Head of caudate nucleus (tissue), 42 donors: ENCODE measurements at regions of chr13 and their contacts with region 1.

Region 1: DNA sequence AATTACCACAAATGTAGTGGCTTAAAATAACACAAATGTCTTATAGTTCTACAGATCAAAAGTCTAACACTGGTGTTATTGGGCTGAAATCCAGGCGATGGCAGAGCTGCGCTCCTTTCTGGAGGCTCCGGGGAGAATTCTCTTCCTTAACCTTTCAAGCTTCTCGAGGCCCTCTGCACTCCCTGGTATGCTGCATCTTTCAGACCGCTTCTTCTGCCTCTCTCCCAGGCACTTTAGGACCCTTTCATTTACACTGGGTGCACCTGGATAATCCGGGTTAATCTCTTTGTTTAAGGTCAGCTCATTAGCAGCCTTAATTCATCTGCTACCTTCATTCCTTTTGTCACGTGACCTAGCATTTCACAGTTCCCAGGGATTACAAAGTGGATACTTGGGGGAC is 211.3 kb upstream of the RFC3 start:
- DNase-seq: peak in 41 of 42 donors; percentile 8 to 84 (median 55)

Region 2: DNA sequence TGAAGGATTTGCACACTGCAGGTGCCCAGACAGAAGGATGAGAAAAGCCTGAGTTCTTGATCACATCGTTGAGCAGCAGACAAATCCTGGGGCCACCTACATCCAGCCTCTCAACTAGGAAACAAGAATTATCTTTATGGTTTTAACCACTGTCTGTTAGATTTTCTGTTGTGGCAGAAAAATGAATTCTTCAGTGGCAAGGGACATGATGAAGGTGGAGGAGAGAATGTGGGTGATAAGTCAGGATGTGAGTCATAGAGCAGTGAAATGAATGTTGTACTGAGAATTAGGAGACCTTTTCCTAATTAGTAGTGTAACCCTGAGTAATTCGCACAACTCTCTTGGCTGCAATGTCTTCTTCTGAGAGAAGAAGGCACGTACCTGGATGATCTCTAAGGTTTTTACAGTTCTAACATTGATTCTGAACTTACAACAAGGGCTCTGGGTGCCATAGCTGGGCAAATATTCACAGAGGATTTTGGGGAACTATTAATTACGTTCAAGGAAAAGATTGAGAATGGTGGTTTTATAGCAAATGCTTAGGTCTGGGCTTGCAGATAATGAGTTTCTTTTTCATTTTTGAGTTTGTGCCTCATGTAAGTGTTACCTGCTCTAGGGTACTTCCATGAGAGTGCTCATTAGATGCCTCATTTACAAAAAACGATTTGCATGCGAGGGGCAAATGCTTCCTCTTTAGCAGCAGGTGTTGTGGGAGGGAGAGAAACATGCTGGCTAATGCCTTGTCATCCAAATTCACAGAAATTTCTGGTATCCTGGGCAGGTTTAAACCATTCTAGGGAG is 701.4 kb before region 1 on chr13:
- intact Hi-C with region 1: no loop called
- DNase-seq: peak in 6 of 42 donors; percentile 13 to 50 (median 22)

Region 3: GRCh38 chr13:33723772-33724435 is 117.2 kb after region 1 on chr13:
- intact Hi-C with region 1: loop called (anchors 10 kb)
- DNase-seq: peak; percentile 44 to 95 (median 82)

Region 4: GRCh38 chr13:34179481-34179880 is 572.8 kb after region 1 on chr13:
- intact Hi-C with region 1: no loop called
- DNase-seq: no peak